ENCODE measurements at regions of chr10 and their contacts with region 1.

Region 1: GRCh38 chr10:102090772-102091171 is 25.6 kb downstream of the HPS6 start:
- DNase-seq: no peak
- ATAC-seq: no peak
- H3K4me3 ChIP-seq: no peak overlapping the region
- H3K4me3 Mint-ChIP-seq: no peak overlapping the region
- H3K27ac ChIP-seq: no peak overlapping the region
- H3K27ac Mint-ChIP-seq: no peak overlapping the region
- H3K4me1 ChIP-seq: no peaks in the 10 kb centered on the region
- H3K4me1 Mint-ChIP-seq: no peaks in the 10 kb centered on the region
- H3K27me3 ChIP-seq: no peaks in the 10 kb centered on the region
- H3K27me3 Mint-ChIP-seq: no peaks in the 10 kb centered on the region

Region 2: DNA sequence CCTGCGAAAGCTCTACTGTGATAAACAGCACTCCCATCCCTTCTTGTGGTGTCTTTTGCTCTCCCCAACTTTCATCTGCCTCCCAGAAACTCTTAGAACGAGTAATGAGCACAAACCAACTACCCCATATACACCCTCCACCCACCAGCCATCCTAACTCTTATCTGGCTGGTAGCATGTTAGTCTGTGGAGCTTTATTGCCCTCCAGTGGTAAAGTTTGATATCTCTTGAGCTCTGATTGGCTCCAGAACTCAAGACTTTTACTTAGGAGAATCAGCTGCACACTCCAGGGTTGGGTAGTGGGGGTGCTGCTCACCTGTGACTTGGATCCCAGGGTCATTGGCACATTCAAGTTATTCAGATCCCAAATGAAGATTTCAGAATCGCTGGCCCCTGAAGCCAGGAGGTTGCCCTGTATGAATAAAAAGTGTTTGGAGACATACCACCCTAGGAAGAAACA is 1582.1 kb before region 1 on chr10:
- CTCF ChIA-PET with region 1: no interaction called
- POLR2A ChIA-PET with region 1: no interaction called
- DNase-seq: peak in 25 of 35 experiments; percentile 5 to 84 (median 33)
- ATAC-seq: peak; percentile 53 to 68 (median 61)
- H3K4me3 ChIP-seq: no peak overlapping the region
- H3K4me3 Mint-ChIP-seq: peak overlapping the region; percentile 25 to 70 (median 37)
- H3K27ac ChIP-seq: peak overlapping the region; percentile 66
- H3K27ac Mint-ChIP-seq: peak overlapping the region; percentile 89 to 90
- H3K4me1 ChIP-seq: peaks cover 36 to 50% of the 10 kb centered on the region in 2 experiments
- H3K4me1 Mint-ChIP-seq: peaks cover 66 to 73% (median 71%) of the 10 kb centered on the region in 3 donors
- H3K27me3 ChIP-seq: no peaks in the 10 kb centered on the region
- H3K27me3 Mint-ChIP-seq: no peaks in the 10 kb centered on the region

Region 3: DNA sequence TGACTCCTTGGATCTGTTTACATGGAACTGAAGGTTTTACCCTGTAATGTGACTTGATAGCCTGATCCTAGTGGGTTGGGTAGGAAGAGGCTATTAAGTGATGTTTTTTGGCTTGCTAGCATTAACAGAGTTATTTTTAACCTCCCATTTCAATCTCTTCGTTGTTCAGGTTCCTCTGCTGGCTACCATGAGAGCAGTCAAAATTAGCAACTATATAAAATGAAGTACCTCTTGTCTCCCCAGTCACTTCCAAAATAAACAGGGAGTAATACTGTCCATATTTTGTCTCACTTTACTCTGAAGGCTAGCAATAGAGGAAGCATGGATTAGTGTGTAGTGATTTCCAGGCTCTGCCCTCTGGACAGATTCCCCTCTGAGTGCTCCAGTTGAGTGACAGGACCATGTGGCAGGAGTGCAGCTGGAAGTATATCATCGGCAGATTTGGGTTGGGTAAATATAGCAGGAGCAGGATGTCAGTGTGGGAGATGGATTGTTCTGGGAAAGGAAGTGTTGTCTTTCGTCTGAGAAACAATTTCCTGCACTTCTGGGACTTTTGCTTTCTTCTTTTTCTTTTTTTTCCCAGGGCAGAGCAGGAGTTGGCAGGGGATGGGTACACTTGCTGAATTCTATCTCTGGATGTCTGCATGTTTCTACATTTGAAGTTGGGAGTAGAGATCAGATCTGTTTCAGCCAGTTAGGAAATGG is 189.8 kb after region 1 on chr10:
- CTCF ChIA-PET with region 1: no interaction called
- POLR2A ChIA-PET with region 1: interaction called in 1 of 2 experiments, 12 read pairs
- DNase-seq: no peak
- ATAC-seq: no peak
- H3K4me3 ChIP-seq: no peak overlapping the region
- H3K4me3 Mint-ChIP-seq: peak overlapping the region in 1 of 3 donors; percentile 53
- H3K27ac ChIP-seq: no peak overlapping the region
- H3K27ac Mint-ChIP-seq: peak overlapping the region; percentile 60 to 77
- H3K4me1 ChIP-seq: peaks cover 8 to 17% of the 10 kb centered on the region in 2 experiments
- H3K4me1 Mint-ChIP-seq: peaks cover 55 to 68% (median 61%) of the 10 kb centered on the region in 3 donors
- H3K27me3 ChIP-seq: no peaks in the 10 kb centered on the region
- H3K27me3 Mint-ChIP-seq: no peaks in the 10 kb centered on the region

Measured in T-cell (primary cell).